ENCODE measurements at regions of chr5 and their contacts with region 1.

Region 1: GRCh38 chr5:64880821-64881220 is 112.1 kb downstream of the CWC27 start:
- DNase-seq: no peak
- H3K4me3 ChIP-seq: no peak overlapping the region
- H3K27ac ChIP-seq: no peak overlapping the region
- H3K4me1 ChIP-seq: no peaks in the 10 kb centered on the region
- H3K27me3 ChIP-seq: no peaks in the 10 kb centered on the region
- CTCF ChIP-seq: no peak
- POLR2A ChIP-seq: no peak

Region 2: GRCh38 chr5:64869419-64869818 is 11.4 kb before region 1 on chr5:
- CTCF ChIA-PET with region 1: interaction called, 14 read pairs
- POLR2A ChIA-PET with region 1: no interaction called
- dilution Hi-C with region 1: no loop called
- intact Hi-C with region 1: no loop called
- DNase-seq: peak; percentile 56
- H3K4me3 ChIP-seq: no peak overlapping the region
- H3K27ac ChIP-seq: no peak overlapping the region
- H3K4me1 ChIP-seq: peaks cover 5% of the 10 kb centered on the region
- H3K27me3 ChIP-seq: no peaks in the 10 kb centered on the region
- CTCF ChIP-seq: no peak
- POLR2A ChIP-seq: no peak

Measured in endothelial cell of umbilical vein (primary cell).